Dorsolateral prefrontal cortex (tissue), 120 donors: ENCODE measurements at regions of chrX and their contacts with region 1.

Region 1: GRCh38 chrX:78103623-78104446 is at the start of gene PGK1:
- DNase-seq: peak; percentile 90 to 96 (median 94)
- H3K4me3 ChIP-seq: peak within 1 kb of the TSS; percentile 48 to 90 (median 74)
- H3K27ac ChIP-seq: peak within 1 kb of the TSS; percentile 58 to 97 (median 91)
- H3K27me3 ChIP-seq: peaks cover 0 to 39% (median 8%) of the 10 kb centered on the region in 45 donors
- CTCF ChIP-seq: peak in 13 of 56 donors; percentile 10 to 34 (median 17)
- total RNA-seq, gene PGK1: 194 to 664 (median 404) TPM

Region 2: DNA sequence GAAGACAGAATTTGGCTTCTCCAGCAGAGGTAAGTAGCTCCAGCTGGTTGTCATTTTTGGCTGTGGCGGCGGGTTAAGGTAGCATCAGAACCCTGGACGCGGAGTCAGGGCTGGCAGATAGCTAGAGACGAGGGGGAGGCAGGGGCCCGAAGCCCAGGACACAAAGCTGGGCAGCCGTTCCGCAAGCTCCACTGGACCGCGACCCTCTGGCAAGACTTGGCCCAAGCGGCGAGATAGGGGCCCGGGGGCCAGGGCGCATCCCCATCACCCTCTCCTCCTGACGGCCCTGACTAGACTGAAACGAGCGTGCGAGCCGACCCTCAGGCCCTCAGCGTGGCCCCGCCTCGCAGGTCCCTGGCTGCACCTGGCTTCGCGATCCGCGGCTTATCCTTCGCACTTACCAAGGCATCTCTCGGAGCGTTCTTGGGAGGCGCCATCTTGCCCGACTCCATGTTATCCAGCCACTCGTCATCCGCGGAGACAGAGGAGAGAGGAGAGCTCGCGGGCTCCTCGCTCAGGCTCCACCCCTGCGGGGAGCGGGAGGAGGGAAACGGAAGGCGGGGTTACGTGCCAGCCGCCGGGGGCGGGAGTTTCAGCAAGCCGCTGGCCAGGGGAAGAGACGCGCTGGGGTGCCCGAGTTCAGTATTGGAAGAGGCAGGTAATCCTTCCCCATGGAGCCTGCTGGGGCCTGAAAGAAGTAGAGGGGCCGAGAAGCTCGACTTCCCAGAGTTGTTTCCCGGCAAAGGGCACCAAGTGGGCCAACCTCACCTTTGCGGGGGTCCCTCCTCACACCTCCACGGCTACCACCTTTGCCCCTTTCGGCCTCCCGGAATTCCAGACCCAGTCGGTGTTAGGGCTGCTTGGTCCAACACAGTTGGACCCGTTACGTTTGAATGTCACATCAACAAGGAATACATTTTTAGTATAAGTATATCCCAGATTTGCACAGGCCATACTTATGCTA is 35.6 kb after region 1 on chrX and contains the start of gene TAF9B:
- intact Hi-C with region 1: loop called in 1 of 2 experiments (anchors 5 kb)
- DNase-seq: peak; percentile 63 to 90 (median 82)
- H3K4me3 ChIP-seq: peak within 1 kb of the TSS; percentile 35 to 86 (median 72)
- H3K27ac ChIP-seq: peak within 1 kb of the TSS; percentile 27 to 95 (median 88)
- H3K27me3 ChIP-seq: peaks cover 0 to 13% (median 0%) of the 10 kb centered on the region in 45 donors
- CTCF ChIP-seq: peak in 11 of 56 donors; percentile 6 to 34 (median 15)
- total RNA-seq, gene TAF9B: 11.2 to 41.9 (median 26.8) TPM